OCI-LY7 (cell line): ENCODE measurements at regions of chr16 and their contacts with region 1.

Region 1: GRCh38 chr16:70251629-70252354 is at the start of gene EXOSC6:
- DNase-seq: peak; percentile 97
- H3K4me3 ChIP-seq: peak within 1 kb of the TSS; percentile 91
- H3K27ac ChIP-seq: peak within 1 kb of the TSS; percentile 87
- H3K4me1 ChIP-seq: peaks cover 11% of the 10 kb centered on the region
- CTCF ChIP-seq: peak; percentile 85
- total RNA-seq, gene EXOSC6: 30.8 and 36.8 TPM in 2 replicates

Region 2: GRCh38 chr16:69513188-69513961 is 738.4 kb before region 1 on chr16:
- CTCF ChIA-PET with region 1: no interaction called
- POLR2A ChIA-PET with region 1: interaction called, 10 read pairs
- intact Hi-C with region 1: no loop called
- DNase-seq: no peak
- H3K4me3 ChIP-seq: no peak overlapping the region
- H3K27ac ChIP-seq: no peak overlapping the region
- H3K4me1 ChIP-seq: peaks cover 6% of the 10 kb centered on the region
- CTCF ChIP-seq: no peak